ENCODE measurements at regions of chr17 and their contacts with region 1.

Region 1: DNA sequence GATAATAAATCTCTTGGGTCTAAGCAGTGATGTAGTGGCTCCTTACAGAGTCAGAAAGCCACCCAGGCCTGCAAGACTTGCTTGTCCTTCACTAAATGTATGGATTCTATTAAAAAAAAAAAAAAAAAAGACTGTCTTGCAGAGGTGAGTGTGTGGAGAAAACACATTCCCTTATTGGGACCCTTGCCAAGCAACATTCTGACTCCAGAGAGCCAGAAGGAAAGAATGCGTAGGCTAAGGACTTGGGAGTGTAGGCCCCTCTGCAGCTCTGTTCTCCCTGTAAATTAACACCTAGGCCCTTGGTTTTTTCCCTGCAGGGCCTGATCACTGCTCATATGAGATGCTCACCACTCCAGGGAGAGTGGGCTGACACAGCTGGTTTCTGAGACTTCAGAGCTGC is 17.8 kb downstream of the SCPEP1 start:
- DNase-seq: no peak
- H3K4me3 ChIP-seq: no peak overlapping the region
- H3K27ac ChIP-seq: no peak overlapping the region
- H3K4me1 ChIP-seq: no peaks in the 10 kb centered on the region
- H3K27me3 ChIP-seq: no peaks in the 10 kb centered on the region
- CTCF ChIP-seq: no peak
- POLR2A ChIP-seq: no peak

Region 2: GRCh38 chr17:57009737-57010445 is 14.1 kb after region 1 on chr17:
- CTCF ChIA-PET with region 1: interaction called, 13 read pairs
- POLR2A ChIA-PET with region 1: no interaction called
- dilution Hi-C with region 1: no loop called
- intact Hi-C with region 1: no loop called
- DNase-seq: peak; percentile 73
- H3K4me3 ChIP-seq: no peak overlapping the region
- H3K27ac ChIP-seq: no peak overlapping the region
- H3K4me1 ChIP-seq: peaks cover 4% of the 10 kb centered on the region
- H3K27me3 ChIP-seq: peaks cover 3 to 6% of the 10 kb centered on the region in 2 experiments
- CTCF ChIP-seq: peak; percentile 66 to 73
- POLR2A ChIP-seq: no peak

Region 3: DNA sequence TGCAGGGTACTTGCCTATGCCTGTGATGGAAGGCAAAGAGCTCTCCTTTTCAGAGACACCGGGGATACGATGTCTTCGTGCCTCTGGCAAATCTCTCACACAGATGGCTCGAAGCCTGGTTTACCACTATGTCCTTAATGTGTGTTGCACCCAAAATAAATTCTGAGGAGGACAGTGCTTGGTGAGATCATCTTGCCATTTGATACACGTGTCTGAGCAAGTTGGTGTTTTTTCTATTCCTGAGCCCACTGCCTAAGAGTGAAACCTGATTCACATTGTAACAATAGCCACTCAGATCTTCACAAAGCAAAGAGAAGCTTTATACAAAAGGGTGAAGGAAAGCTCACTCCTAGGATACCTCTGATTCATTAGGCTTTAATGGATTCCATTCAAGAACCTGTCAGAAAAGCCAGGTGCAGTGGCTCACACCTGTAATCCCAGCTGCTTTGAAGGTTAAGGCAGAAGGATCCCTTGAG is 56.2 kb after region 1 on chr17:
- CTCF ChIA-PET with region 1: no interaction called
- POLR2A ChIA-PET with region 1: no interaction called
- dilution Hi-C with region 1: no loop called
- intact Hi-C with region 1: no loop called
- DNase-seq: no peak
- H3K4me3 ChIP-seq: no peak overlapping the region
- H3K27ac ChIP-seq: no peak overlapping the region
- H3K4me1 ChIP-seq: no peaks in the 10 kb centered on the region
- H3K27me3 ChIP-seq: peaks cover 2 to 12% of the 10 kb centered on the region in 2 experiments
- CTCF ChIP-seq: no peak
- POLR2A ChIP-seq: no peak

Measured in endothelial cell of umbilical vein (primary cell).